Activated naive CD4-positive, alpha-beta T cell treated with anti-CD3 and anti-CD28 coated beads for 36 hours (primary cell): ENCODE measurements at regions of chr19 and their contacts with region 1.

Region 1: DNA sequence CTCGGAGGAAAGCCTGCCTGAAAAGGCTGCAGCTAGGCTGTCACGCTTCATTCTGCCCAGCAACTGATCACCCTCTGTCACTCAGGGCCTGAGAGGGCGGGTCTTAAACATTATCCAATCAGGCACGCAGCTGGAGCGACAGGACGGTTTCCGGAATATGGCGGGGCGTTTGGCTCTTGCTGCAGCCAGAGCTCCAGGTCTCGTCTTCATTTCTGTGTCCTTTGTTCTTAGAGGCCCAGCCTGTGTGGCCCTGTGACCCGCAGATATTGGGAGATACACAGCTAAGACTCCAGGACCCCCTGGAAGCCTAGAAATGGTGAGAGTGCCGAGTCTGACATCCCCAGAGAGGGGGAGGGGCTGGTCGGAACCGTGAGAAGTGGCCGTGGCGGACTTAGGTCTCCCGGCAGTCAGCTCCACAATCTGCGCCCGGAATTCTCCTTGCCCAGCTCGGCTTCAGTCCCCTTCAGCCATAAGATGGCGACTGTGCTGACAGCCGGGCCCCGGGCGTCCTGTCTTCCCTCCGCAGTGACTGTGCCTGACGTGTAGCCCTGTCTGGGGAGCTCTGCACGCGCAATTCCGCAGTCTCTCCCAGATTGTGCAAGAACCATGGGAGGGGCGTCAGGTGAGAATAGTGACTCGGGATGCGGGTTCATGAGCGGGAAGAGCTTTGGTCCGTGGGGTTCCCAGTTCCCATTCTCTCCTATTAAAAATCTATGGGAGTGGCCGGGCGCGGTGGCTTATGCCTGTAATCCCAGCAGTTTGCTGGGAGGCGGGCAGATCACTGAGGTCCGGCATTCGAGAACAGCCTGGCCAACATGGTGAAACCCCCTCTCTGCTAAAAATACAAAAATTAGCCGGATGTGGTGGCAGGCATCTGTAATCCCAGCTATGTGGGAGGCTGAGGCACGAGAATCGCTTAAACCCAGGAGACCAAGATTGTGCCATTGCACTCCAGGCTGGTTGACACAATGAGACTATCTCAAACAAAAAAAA is at the start of gene ZNF429:
- DNase-seq: peak; percentile 96
- H3K4me3 Mint-ChIP-seq: peak within 1 kb of the TSS; percentile 95
- H3K27ac Mint-ChIP-seq: peak within 1 kb of the TSS; percentile 97
- H3K4me1 Mint-ChIP-seq: peaks cover 30% of the 10 kb centered on the region
- H3K27me3 Mint-ChIP-seq: no peaks in the 10 kb centered on the region
- total RNA-seq, gene ZNF429: 10.2 TPM

Region 2: DNA sequence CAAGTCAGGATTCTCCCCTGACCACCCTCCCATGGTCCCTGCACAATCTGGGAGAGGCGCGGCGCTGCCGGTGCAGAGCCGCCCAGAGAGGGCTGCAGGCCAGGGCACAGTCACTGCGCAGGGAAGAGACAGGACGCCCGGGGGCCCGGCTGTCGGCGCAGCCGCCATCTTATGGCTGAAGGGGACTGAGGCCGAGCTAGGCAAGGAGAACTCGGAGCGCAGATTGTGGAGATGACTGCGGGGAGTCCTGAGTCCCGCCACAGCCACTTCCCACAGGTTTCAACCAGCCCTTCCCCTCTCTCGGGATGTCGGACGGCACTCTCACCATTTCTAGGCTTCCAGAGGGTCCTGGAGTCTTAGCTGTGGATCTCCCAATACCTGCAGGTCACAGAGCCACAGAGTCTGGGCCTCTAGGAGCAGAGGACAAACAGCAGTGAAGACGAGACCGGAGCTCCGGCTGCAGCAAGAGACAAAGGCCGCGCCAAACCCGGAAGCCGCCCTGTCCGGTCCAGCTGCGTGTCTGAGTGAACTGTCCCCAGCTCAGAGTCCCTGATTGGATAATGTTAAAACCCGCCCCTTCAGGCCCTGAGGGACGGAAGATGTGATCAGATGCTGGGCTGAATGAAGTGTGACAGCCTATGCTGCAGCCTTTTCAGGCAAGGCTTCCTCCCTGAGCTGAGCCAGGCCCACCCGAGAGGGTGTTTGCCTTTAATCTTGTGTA is 176.7 kb before region 1 on chr19 and contains the start of gene ZNF708:
- CTCF ChIA-PET with region 1: no interaction called
- intact Hi-C with region 1: loop called (anchors 1 kb)
- DNase-seq: peak; percentile 90
- H3K4me3 Mint-ChIP-seq: peak within 1 kb of the TSS; percentile 98
- H3K27ac Mint-ChIP-seq: peak within 1 kb of the TSS; percentile 98
- H3K4me1 Mint-ChIP-seq: peaks cover 33% of the 10 kb centered on the region
- H3K27me3 Mint-ChIP-seq: no peaks in the 10 kb centered on the region
- total RNA-seq, gene ZNF708: 7.8 to 10.9 TPM

Region 3: GRCh38 chr19:21474671-21475181 is 31.0 kb before region 1 on chr19:
- CTCF ChIA-PET with region 1: no interaction called
- intact Hi-C with region 1: loop called (anchors 1 kb)
- DNase-seq: peak; percentile 93
- H3K4me3 Mint-ChIP-seq: peak overlapping the region; percentile 83
- H3K27ac Mint-ChIP-seq: no peak overlapping the region
- H3K4me1 Mint-ChIP-seq: peaks cover 4% of the 10 kb centered on the region
- H3K27me3 Mint-ChIP-seq: no peaks in the 10 kb centered on the region

Region 4: GRCh38 chr19:21581646-21582240 is 76.0 kb after region 1 on chr19:
- CTCF ChIA-PET with region 1: interaction called, 3 read pairs
- intact Hi-C with region 1: loop called (anchors 5 kb)
- DNase-seq: no peak
- H3K4me3 Mint-ChIP-seq: no peak overlapping the region
- H3K27ac Mint-ChIP-seq: no peak overlapping the region
- H3K4me1 Mint-ChIP-seq: peaks cover 29% of the 10 kb centered on the region
- H3K27me3 Mint-ChIP-seq: no peaks in the 10 kb centered on the region

Region 5: GRCh38 chr19:21638776-21639175 is 133.0 kb after region 1 on chr19:
- CTCF ChIA-PET with region 1: no interaction called
- intact Hi-C with region 1: no loop called
- DNase-seq: no peak
- H3K4me3 Mint-ChIP-seq: no peak overlapping the region
- H3K27ac Mint-ChIP-seq: no peak overlapping the region
- H3K4me1 Mint-ChIP-seq: no peaks in the 10 kb centered on the region
- H3K27me3 Mint-ChIP-seq: no peaks in the 10 kb centered on the region

Region 6: DNA sequence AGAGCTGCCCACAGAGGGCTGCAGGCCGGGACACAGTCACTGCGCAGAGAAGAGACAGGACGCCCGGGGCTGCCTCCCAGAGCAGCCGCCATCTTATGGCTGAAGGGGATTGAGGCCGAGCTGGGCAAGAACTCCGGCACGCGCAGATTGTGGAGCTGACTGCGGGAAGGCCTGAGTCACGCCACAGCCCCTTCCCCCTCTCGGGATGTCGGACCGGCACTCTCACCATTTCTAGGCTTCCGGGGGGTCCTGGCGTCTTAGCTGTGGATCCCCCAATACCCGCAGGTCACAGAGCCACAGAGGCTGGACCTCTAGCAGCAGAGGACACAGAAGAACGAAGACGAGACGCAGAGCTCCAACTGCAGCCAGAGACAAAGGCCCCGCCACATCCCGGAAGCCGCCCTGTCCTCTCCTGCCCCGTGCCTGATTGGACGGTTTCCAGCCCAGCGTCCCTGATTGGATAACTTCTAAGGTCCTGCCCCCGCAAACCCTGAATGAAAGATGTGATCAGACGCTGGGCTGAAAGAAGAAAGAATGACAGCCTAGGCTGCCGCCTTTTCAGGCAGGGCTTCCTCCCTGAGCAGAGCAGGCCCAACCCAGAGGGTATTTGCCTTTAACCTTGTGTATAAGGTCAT is 330.2 kb after region 1 on chr19 and contains the start of gene ZNF43:
- CTCF ChIA-PET with region 1: no interaction called
- intact Hi-C with region 1: loop called (anchors 2 kb)
- DNase-seq: peak; percentile 97
- H3K4me3 Mint-ChIP-seq: peak within 1 kb of the TSS; percentile 98
- H3K27ac Mint-ChIP-seq: peak within 1 kb of the TSS; percentile 99
- H3K4me1 Mint-ChIP-seq: peaks cover 37% of the 10 kb centered on the region
- H3K27me3 Mint-ChIP-seq: no peaks in the 10 kb centered on the region
- total RNA-seq, gene ZNF43: 25.8 to 27.8 TPM